ENCODE measurements at regions of chr5 and their contacts with region 1.

Region 1: DNA sequence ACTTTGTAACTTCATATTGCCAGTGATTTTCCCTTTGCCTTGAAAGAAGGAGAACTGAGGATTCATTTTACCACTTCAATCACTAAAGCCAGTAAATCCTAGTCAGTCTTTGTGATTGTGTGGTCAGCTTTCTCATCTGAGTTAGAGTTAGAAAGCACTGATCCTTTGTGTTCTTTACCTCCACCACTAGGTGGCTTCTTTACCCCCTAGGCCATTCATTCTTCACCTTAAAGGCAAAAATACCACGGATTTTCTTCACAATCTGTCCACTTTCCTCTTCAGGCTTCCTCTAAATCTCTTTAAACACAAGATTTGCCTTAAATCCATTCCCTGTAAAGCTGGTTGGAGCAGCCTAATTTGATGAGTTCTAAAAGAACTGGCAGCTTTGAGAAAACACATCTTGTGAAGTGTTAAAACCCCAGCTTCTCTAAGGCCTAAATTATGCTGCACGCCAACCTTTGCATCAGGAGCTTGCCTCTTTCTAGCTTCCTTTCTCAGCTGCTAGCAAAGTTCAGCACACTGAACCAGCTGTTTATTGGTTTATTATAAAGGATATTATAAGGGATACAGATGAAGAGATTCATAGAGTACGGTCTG is 20.4 kb downstream of the BDP1 start:
- DNase-seq: no peak
- ATAC-seq: peak; percentile 77
- H3K4me3 Mint-ChIP-seq: no peak overlapping the region
- H3K27ac Mint-ChIP-seq: no peak overlapping the region
- H3K4me1 Mint-ChIP-seq: no peaks in the 10 kb centered on the region
- H3K27me3 Mint-ChIP-seq: no peaks in the 10 kb centered on the region

Region 2: DNA sequence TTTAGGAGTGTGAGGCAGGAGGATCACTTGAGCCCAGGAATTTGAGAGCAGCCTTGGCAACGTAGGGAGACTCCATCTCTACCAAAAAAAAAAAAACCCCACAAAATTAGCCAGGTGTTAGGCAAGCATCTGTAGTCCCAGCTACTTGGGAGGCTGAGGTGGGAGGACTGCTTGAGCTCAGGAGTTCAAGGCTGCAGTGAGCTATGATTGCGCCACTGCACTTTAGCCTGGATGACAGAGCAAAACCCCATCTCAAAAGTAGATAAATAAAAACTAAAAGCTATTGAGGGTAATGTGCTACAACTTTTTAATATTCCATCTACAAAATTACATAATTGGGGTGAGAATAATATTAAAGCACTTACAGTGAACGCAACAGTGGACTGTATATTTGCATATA is 14.5 kb before region 1 on chr5:
- CTCF ChIA-PET with region 1: interaction called, 14 read pairs
- POLR2A ChIA-PET with region 1: no interaction called
- DNase-seq: no peak
- ATAC-seq: no peak
- H3K4me3 Mint-ChIP-seq: no peak overlapping the region
- H3K27ac Mint-ChIP-seq: no peak overlapping the region
- H3K4me1 Mint-ChIP-seq: peaks cover 15% of the 10 kb centered on the region
- H3K27me3 Mint-ChIP-seq: no peaks in the 10 kb centered on the region

Region 3: DNA sequence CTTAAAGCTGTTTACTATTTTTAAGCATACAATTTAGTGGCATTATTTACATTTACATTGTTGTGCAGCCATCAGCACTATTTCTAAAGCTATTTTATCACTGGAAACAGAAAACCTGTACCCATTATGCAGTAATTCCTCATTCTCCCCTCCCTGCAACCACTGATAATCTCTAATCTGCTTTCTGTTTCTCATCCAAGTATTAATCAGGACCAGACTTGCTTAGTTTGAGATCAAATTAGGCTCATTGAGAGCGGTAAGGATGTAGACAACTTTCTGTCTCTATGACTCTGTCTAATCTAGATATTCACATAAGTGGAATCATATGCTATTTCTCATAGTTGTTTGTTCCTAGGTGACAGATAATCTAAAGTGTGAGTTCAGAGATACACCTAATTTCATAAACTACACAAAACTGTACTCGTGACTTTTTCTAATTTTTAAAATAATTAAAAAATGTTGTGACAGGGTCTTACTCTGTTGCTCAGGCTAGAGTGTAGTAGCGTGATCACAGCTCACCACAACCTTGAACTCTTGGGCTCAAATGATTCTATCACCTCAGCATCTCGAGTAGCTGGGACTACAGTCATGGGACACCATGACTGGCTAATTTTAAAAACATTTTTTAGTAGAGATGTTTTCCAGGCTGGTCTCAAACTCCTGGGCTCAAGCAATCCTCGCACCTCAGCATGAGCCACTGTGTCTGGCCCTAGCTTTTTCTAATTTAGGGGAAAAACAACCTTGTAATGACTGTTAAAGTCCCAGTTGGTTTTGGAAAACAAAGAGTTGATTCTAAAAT is 17.1 kb after region 1 on chr5:
- CTCF ChIA-PET with region 1: interaction called, 20 read pairs
- POLR2A ChIA-PET with region 1: no interaction called
- DNase-seq: no peak
- ATAC-seq: no peak
- H3K4me3 Mint-ChIP-seq: no peak overlapping the region
- H3K27ac Mint-ChIP-seq: no peak overlapping the region
- H3K4me1 Mint-ChIP-seq: no peaks in the 10 kb centered on the region
- H3K27me3 Mint-ChIP-seq: no peaks in the 10 kb centered on the region

Region 4: DNA sequence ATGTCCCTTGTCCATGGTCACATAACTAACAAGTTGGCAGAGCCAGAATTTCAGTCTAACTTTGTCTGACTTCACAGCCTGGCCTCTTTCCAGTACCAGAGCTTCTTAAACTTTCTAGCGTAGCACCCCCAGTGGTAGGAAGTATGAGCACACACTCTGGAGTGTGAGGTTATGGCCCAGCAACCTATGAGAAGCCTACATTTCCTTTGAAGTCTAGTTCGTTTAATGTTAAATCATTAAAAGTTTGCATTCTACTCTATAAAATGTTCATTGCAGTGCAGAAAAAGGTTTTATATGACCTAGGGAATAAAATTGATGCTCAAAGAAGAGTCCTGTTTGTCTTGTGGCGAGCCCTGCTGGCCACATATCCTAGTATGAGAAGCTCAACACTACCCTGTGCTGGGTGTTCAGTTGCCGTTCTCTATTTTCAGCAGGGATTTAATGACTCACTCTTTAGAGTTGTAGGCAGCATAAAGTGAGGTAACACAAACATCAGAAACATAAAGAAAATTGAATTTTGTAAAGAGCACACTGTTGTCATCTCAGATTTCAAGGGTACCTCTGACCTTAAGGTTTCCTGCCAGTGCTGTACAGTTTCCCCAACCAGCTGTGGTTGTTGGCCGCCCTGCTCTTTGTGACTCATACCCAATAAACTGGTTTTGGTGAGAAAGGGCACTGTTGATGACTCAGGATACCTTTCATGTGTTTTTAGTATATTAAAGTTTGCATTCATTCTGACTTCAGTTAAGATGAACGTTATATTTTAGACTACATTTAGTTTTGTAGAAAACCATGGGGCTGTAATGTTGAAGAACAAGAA is 125.5 kb after region 1 on chr5:
- CTCF ChIA-PET with region 1: interaction called, 20 read pairs
- POLR2A ChIA-PET with region 1: no interaction called
- DNase-seq: peak; percentile 87
- ATAC-seq: peak; percentile 94
- H3K4me3 Mint-ChIP-seq: peak overlapping the region; percentile 16
- H3K27ac Mint-ChIP-seq: peak overlapping the region; percentile 93
- H3K4me1 Mint-ChIP-seq: peaks cover 41% of the 10 kb centered on the region
- H3K27me3 Mint-ChIP-seq: no peaks in the 10 kb centered on the region

Region 5: DNA sequence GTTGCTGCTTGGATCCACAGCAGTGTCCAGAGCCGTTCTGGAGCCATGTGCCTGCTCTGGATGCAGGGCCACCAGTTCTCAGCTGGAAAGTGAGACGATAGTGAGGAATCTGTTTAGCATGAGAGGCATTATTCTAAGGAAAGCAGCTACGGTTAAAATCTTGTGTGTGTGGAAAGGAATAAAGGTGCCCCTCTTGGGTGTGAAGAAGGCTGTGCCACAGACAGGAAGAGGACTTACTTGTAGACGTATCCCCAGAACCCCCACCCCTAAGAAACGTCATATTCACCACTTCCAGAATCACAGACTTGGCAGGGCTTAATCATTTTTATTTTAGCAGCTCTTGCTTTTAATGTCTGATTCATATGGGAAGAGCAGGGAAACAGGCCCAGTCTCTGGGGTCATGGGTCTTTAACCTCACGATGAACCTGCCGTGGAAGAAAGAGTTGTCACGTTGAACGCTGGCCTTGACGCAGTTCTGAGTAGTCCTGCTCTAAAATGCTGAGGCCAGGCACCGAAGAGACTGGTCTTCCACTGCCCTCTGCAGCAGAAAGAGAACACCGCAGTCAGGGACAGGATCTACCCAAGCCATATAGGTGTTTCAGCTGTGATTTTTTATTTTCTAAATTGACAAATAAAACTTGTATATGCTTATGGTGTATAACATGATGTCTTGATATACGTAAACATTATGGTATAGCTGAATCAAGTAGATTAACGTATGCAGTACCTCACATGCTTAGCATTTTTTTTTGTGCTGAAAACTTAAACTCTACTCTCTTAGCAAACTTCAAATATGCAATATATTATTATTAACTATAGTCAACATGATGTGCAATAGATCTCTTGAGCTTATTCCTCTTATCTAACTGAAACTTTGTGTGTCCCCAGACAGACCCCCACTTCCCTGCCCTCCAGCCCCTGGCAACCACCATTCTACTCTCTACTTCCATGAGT is 282.0 kb after region 1 on chr5:
- CTCF ChIA-PET with region 1: interaction called, 45 read pairs
- POLR2A ChIA-PET with region 1: no interaction called
- DNase-seq: peak; percentile 67
- ATAC-seq: peak; percentile 92
- H3K4me3 Mint-ChIP-seq: peak overlapping the region; percentile 25
- H3K27ac Mint-ChIP-seq: no peak overlapping the region
- H3K4me1 Mint-ChIP-seq: peaks cover 6% of the 10 kb centered on the region
- H3K27me3 Mint-ChIP-seq: peaks cover 7% of the 10 kb centered on the region